ENCODE measurements at regions of chr10 and their contacts with region 1.

Region 1: GRCh38 chr10:90969947-90970684 is 49.2 kb upstream of the ANKRD1 start:
- DNase-seq: no peak
- H3K4me3 Mint-ChIP-seq: no peak overlapping the region
- H3K27ac Mint-ChIP-seq: no peak overlapping the region
- H3K4me1 Mint-ChIP-seq: no peaks in the 10 kb centered on the region
- H3K27me3 Mint-ChIP-seq: no peaks in the 10 kb centered on the region

Region 2: GRCh38 chr10:90319188-90319914 is 650.8 kb before region 1 on chr10:
- CTCF ChIA-PET with region 1: no interaction called
- intact Hi-C with region 1: no loop called
- DNase-seq: peak; percentile 21
- H3K4me3 Mint-ChIP-seq: no peak overlapping the region
- H3K27ac Mint-ChIP-seq: no peak overlapping the region
- H3K4me1 Mint-ChIP-seq: peaks cover 2% of the 10 kb centered on the region
- H3K27me3 Mint-ChIP-seq: peaks cover 2% of the 10 kb centered on the region

Region 3: GRCh38 chr10:90885176-90885575 is 84.9 kb before region 1 on chr10:
- CTCF ChIA-PET with region 1: no interaction called
- intact Hi-C with region 1: loop called (anchors 1 kb)
- DNase-seq: no peak
- H3K4me3 Mint-ChIP-seq: no peak overlapping the region
- H3K27ac Mint-ChIP-seq: no peak overlapping the region
- H3K4me1 Mint-ChIP-seq: peaks cover 2% of the 10 kb centered on the region
- H3K27me3 Mint-ChIP-seq: no peaks in the 10 kb centered on the region

Region 4: DNA sequence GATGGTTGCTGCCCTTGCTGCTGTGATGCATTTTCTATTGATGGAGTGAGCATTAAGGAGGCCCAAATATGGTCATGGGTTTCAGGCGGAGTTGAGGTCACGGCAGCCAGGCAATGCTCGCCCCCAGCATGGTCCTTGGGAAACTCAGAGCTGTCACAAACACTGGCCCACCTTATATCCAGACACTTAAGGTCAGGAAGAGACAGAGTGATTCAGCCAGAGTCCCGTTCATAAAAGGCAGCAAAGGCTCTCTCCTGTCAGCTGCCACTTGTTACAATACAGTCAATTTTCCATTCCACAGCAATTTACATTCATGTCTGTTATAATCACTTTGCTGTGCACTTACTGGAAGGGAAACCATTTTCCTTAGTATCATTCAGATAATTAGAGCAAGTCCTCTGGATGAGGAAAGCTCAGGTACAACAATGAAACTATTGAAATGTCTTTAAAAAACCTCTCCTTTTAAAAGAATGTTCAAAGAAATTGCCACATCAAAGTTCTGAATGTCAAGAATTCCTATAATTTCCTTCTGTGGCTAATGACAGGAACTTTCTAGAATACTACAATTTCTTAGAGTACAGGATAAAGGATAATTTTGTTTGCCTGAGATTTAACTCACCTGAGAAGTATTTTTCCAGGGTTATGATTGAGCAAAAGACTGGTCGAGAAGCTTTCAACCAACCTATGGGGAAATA is 34.4 kb before region 1 on chr10:
- CTCF ChIA-PET with region 1: no interaction called
- intact Hi-C with region 1: no loop called
- DNase-seq: no peak
- H3K4me3 Mint-ChIP-seq: no peak overlapping the region
- H3K27ac Mint-ChIP-seq: no peak overlapping the region
- H3K4me1 Mint-ChIP-seq: peaks cover 2% of the 10 kb centered on the region
- H3K27me3 Mint-ChIP-seq: peaks cover 3% of the 10 kb centered on the region

Region 5: GRCh38 chr10:91360400-91360799 is 390.3 kb after region 1 on chr10:
- CTCF ChIA-PET with region 1: no interaction called
- intact Hi-C with region 1: no loop called
- DNase-seq: no peak
- H3K4me3 Mint-ChIP-seq: no peak overlapping the region
- H3K27ac Mint-ChIP-seq: no peak overlapping the region
- H3K4me1 Mint-ChIP-seq: no peaks in the 10 kb centered on the region
- H3K27me3 Mint-ChIP-seq: peaks cover 54% of the 10 kb centered on the region